ENCODE measurements at regions of chr15 and their contacts with region 1.

Region 1: DNA sequence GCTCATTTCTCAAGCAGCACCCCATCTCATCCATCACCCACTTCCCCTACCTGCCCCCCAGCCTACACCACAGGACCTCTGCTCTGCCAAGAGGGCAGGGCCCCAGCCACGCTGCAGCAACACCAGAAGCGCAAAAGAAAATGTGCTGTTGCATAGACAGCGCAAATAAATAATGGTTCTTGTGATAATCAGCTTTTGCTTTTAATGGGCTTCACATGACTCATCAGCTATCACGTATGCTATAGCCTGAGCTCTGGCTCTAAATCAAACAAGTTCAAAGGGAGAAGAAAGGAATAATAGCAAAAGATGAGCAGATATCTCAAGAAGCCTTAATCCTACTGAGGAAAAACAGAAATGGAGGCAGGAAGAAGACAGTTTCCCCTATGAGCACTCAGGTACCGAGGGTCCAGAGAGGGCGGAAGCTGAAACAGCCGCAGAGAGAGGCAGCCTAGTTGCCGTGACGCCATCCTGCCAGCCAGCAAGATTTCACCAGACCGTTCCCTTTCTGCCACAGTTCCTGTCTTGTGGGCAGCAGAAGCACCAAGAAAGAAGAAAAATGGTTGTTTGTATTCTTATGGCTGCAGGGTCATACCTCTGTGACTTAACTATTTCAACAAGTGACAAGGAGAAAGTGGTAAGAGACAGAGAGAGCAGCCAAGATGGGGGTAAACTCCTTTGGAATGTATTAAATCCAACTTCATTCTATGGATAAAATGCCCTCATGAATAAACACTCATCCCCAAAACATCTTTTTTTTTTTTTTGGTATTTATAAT is 22.0 kb downstream of the RAB27A start:
- DNase-seq: peak; percentile 91
- ATAC-seq: peak; percentile 87
- H3K4me3 Mint-ChIP-seq: peak overlapping the region; percentile 73
- H3K27ac Mint-ChIP-seq: peak overlapping the region; percentile 98
- H3K4me1 Mint-ChIP-seq: peaks cover 91% of the 10 kb centered on the region
- H3K27me3 Mint-ChIP-seq: no peaks in the 10 kb centered on the region

Region 2: GRCh38 chr15:55179141-55179540 is 88.4 kb before region 1 on chr15:
- CTCF ChIA-PET with region 1: no interaction called
- DNase-seq: no peak
- ATAC-seq: no peak
- H3K4me3 Mint-ChIP-seq: no peak overlapping the region
- H3K27ac Mint-ChIP-seq: no peak overlapping the region
- H3K4me1 Mint-ChIP-seq: peaks cover 4% of the 10 kb centered on the region
- H3K27me3 Mint-ChIP-seq: no peaks in the 10 kb centered on the region

Region 3: GRCh38 chr15:55221090-55222011 is 46.2 kb before region 1 on chr15:
- CTCF ChIA-PET with region 1: interaction called, 16 read pairs
- DNase-seq: peak; percentile 80
- ATAC-seq: peak; percentile 74
- H3K4me3 Mint-ChIP-seq: peak overlapping the region; percentile 63
- H3K27ac Mint-ChIP-seq: peak overlapping the region; percentile 96
- H3K4me1 Mint-ChIP-seq: peaks cover 89% of the 10 kb centered on the region
- H3K27me3 Mint-ChIP-seq: no peaks in the 10 kb centered on the region

Region 4: GRCh38 chr15:55250392-55250791 is 17.2 kb before region 1 on chr15:
- CTCF ChIA-PET with region 1: interaction called, 12 read pairs
- DNase-seq: no peak
- ATAC-seq: no peak
- H3K4me3 Mint-ChIP-seq: no peak overlapping the region
- H3K27ac Mint-ChIP-seq: peak overlapping the region; percentile 91
- H3K4me1 Mint-ChIP-seq: peaks cover 84% of the 10 kb centered on the region
- H3K27me3 Mint-ChIP-seq: no peaks in the 10 kb centered on the region

Region 5: DNA sequence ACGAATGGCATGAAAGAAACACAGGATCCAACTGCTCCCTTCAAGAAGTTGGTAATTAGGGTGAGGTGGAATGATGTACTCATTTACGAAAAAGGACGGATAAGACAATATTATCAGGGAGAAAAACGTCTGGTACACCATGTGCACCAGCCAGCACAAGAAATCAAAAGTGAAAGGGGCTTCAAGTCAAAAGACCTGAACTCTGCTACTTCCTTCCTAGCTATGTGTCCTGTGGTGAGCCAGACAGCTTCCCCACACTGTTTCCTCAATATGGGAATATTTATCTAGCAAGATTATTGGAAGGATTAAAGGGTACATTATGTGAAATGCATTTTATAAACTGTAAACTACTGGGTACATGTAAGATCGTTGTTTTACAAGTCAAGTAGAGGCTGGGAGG is 11.9 kb before region 1 on chr15:
- CTCF ChIA-PET with region 1: interaction called, 12 read pairs
- DNase-seq: peak; percentile 56
- ATAC-seq: peak; percentile 66
- H3K4me3 Mint-ChIP-seq: peak overlapping the region; percentile 81
- H3K27ac Mint-ChIP-seq: peak overlapping the region; percentile 91
- H3K4me1 Mint-ChIP-seq: peaks cover 84% of the 10 kb centered on the region
- H3K27me3 Mint-ChIP-seq: no peaks in the 10 kb centered on the region

Region 6: DNA sequence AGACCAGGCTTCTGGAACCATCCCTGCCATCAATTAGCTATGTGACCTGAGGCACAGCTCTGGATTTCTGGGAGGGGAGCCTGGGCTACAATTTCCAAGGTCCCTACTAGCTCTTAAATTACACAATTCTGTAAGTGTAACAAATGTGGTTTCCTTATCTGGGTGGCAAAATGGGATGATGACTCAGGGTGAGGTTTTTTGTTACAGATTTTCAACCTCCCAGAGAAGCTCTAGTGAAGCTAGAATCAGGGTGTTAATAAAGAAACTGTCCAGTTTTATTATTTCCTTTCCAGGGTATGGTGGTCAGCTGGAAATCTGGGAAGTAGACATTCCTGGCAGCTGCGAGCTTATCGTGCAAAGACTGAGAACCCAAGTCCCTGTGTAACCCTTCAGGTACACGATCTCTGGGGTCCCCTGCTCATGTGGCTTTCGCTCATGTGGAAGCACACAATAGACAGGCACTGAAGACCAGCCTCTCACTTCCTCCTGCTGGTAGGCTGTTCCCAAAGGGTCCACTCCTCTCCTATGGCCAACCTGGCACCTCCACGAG is 14.8 kb after region 1 on chr15:
- CTCF ChIA-PET with region 1: interaction called, 10 read pairs
- DNase-seq: peak; percentile 60
- ATAC-seq: peak; percentile 17
- H3K4me3 Mint-ChIP-seq: peak overlapping the region; percentile 95
- H3K27ac Mint-ChIP-seq: peak overlapping the region; percentile 99
- H3K4me1 Mint-ChIP-seq: peaks cover 93% of the 10 kb centered on the region
- H3K27me3 Mint-ChIP-seq: no peaks in the 10 kb centered on the region

Region 7: DNA sequence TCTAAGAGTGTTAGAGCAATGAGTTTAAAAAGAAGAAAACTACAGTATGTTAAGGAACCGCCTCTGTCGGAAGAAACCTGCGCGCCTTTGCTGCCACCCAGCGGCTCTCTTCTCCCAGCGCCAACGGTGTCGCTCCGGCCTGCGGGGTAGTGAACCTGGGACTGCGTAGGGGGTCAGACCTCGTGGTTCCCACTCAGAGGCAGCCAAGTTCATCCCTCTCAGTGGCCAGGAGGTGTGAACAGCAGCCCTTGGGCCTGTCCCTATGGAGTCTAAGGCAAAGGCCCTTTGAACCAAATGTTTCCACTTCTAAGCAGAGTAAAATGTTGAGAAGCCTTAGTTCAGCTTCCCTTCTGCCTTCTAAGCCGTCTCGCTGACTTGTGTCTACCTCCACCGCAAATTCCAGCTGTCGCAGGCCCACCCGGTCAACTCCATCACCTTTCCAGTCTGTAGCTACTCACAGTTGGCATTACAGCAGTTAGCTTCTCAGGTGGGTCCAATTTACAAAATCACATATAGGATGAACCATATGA is 23.0 kb after region 1 on chr15:
- CTCF ChIA-PET with region 1: interaction called, 10 read pairs
- DNase-seq: peak; percentile 90
- ATAC-seq: peak; percentile 70
- H3K4me3 Mint-ChIP-seq: peak overlapping the region; percentile 95
- H3K27ac Mint-ChIP-seq: peak overlapping the region; percentile 89
- H3K4me1 Mint-ChIP-seq: peaks cover 25% of the 10 kb centered on the region
- H3K27me3 Mint-ChIP-seq: no peaks in the 10 kb centered on the region

Measured in activated CD8-positive, alpha-beta memory T cell treated with anti-CD3 and anti-CD28 coated beads, Interleukin-2, amount 10 ng/mL, durations not matched to agents 7 days and 5 days (primary cell).